ENCODE measurements at regions of chr7 and their contacts with region 1.

Region 1: DNA sequence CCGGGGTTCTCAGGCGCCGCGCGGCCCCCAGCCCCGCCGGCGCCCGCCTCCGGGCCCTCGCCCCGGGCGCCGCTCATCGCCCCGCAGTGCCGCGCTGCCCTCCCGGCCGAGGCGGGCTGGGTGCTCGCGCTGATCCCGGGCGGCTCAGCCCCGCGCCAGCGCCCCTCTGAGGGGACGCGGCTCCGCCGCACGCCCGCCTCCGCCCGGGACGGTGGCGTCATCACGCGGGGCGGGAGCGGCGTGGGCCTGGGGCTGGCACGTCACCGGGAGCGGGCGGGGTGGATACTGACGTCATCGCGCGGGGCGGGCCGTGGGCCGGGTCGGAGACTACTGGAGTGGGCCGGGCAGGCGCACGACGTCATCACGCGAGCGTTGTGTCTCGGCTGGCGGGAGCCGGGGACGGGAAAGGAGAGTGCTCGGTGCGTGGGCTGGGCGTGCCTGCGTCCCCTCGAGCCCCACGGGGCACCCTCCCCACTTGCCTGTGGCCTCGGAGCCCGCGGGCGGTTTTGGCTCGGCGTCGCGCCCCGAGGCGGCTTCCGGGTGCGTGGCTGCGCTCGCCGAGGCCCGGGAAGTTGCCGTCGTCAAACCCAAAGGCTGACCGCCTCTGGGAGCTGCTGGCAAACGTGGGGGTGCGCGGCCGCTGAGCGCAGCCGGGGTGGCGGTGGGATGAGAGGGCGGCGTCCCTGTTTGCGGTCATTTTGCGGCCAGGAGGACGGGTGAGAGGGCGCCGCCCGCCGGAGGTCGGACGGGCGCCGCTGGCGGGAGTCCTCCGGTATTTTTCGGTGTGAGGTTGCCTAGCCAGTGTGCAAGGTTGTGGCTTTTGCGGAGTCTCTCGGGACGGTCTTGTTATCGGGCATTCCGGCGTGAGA is at the start of gene ESYT2:
- DNase-seq: peak; percentile 94
- ATAC-seq: peak; percentile 82
- H3K4me3 ChIP-seq: peak within 1 kb of the TSS; percentile 99
- H3K27ac ChIP-seq: peak within 1 kb of the TSS; percentile 81
- H3K4me1 ChIP-seq: peaks cover 17% of the 10 kb centered on the region
- H3K27me3 ChIP-seq: no peaks in the 10 kb centered on the region
- CTCF ChIP-seq: peak; percentile 32; the same call in 1 of the 2 replicates
- total RNA-seq, gene ESYT2: 76.1 and 78.0 TPM in 2 replicates

Region 2: DNA sequence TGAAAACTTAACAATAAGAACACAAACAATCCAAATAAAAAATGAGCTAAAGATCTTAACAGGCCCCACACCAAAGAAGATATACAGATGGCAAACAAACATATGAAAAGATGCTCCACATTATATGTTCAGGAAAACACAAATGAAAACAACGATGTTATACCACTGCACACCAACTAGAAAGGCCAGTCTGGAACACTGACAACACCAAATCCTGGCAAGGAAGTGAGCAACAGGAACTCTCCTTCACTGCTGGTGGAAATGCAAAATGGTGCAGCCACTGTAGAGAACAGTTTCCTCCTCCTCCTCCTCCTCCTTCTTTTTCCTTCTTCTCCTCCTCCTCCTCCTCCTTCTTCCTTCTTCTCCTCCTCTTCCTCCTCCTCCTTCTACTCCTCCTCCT is 112.8 kb before region 1 on chr7:
- CTCF ChIA-PET with region 1: no interaction called
- POLR2A ChIA-PET with region 1: no interaction called
- intact Hi-C with region 1: no loop called
- DNase-seq: no peak
- ATAC-seq: no peak
- H3K4me3 ChIP-seq: no peak overlapping the region
- H3K27ac ChIP-seq: no peak overlapping the region
- H3K4me1 ChIP-seq: no peaks in the 10 kb centered on the region
- H3K27me3 ChIP-seq: 0 out of 2 replicates have a peak, but pooled peaks cover 4% of the 10 kb centered on the region
- CTCF ChIP-seq: no peak

Region 3: DNA sequence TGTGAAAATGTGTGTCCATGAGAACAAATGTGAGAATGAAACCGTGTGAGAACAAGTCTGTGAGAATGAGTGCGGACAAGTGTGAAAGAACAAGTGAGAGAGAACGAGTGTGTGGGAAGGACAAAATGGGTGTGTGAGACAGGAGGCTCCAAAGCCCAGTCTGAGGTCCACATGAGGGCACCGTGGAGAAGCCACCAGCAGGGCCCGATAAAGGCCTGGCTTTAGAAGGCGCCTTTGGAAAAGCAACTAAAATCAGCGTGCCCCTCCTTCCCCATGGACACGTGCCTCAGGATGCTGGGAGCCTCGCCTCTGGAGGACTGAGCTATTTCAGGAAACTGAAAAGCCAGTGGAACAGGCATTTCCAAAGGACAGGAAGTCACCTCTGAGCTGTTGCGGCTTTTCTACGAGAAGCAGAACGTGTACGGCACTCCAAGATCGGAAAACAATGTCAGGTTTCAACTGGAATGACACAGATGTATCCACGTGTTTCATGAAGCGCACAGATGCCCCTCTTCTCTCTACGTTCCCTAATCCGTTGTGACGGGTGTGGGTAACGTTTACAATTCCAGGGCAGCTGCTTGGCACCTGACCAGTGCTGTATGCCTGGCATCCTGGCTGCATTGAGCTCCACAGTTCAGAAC is 46.7 kb before region 1 on chr7:
- CTCF ChIA-PET with region 1: no interaction called
- POLR2A ChIA-PET with region 1: no interaction called
- intact Hi-C with region 1: loop called (anchors 2 kb)
- DNase-seq: peak; percentile 45
- ATAC-seq: peak; percentile 74
- H3K4me3 ChIP-seq: no peak overlapping the region
- H3K27ac ChIP-seq: no peak overlapping the region
- H3K4me1 ChIP-seq: no peaks in the 10 kb centered on the region; the same call in none of the 2 replicates
- H3K27me3 ChIP-seq: no peaks in the 10 kb centered on the region
- CTCF ChIP-seq: peak; percentile 55

Region 4: GRCh38 chr7:158802473-158803202 is 26.9 kb before region 1 on chr7:
- CTCF ChIA-PET with region 1: no interaction called
- POLR2A ChIA-PET with region 1: interaction called, 10 read pairs
- intact Hi-C with region 1: no loop called
- DNase-seq: peak; percentile 68
- ATAC-seq: peak; percentile 78
- H3K4me3 ChIP-seq: 0 out of 2 replicates have a peak overlapping the region, but pooled peaks have one; percentile 28
- H3K27ac ChIP-seq: peak overlapping the region; percentile 67
- H3K4me1 ChIP-seq: peaks cover 19% of the 10 kb centered on the region
- H3K27me3 ChIP-seq: no peaks in the 10 kb centered on the region
- CTCF ChIP-seq: no peak

Region 5: GRCh38 chr7:158849768-158850544 is 20.4 kb after region 1 on chr7:
- CTCF ChIA-PET with region 1: no interaction called
- POLR2A ChIA-PET with region 1: interaction called, 10 read pairs
- intact Hi-C with region 1: no loop called
- DNase-seq: no peak
- ATAC-seq: no peak; the same call in 1 of the 2 replicates
- H3K4me3 ChIP-seq: no peak overlapping the region
- H3K27ac ChIP-seq: no peak overlapping the region
- H3K4me1 ChIP-seq: no peaks in the 10 kb centered on the region; the same call in 1 of the 2 replicates
- H3K27me3 ChIP-seq: no peaks in the 10 kb centered on the region
- CTCF ChIP-seq: no peak

Region 6: DNA sequence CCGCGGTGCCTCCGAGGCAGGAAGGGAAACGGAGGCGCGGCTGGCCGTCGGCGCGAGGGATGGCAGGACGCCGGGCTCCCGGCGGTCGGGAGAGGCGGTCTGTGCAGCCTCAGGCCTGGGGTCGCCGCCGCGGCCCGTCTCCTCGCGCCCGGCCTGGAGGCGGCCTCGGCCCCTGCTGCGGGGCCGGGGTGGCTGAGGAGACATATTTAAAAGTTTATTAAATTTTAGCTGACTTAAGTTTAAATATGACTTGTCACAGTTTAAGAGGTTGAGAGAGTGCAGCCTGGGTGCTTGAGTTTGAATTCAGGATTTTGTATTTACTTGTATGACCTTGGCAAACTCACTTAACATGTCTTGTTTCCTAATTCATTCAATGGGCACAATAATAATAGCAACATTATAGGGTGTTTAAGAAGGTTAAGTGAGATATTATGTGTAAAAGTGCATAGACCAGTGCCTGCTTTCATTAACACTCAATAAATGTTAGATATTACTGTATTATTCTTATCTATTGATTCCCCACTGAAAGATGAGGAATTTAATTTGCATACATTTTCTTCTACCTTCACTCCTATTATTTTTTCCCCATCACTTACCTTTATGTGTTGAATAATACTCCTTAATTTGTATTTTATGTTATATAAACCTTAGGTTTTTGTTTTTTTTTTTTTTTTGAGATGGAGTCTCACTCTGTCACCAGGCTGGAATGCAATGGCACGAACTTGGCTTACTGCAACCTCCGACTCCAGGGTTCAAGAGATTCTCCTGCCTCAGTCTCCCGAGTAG is 27.5 kb after region 1 on chr7:
- CTCF ChIA-PET with region 1: interaction called, 4 read pairs
- POLR2A ChIA-PET with region 1: interaction called, 4 read pairs
- intact Hi-C with region 1: loop called (anchors 2 kb)
- DNase-seq: no peak
- ATAC-seq: peak; percentile 23
- H3K4me3 ChIP-seq: peak overlapping the region; percentile 75
- H3K27ac ChIP-seq: 0 out of 2 replicates have a peak overlapping the region, but pooled peaks have one; percentile 8
- H3K4me1 ChIP-seq: peaks cover 28% of the 10 kb centered on the region
- H3K27me3 ChIP-seq: no peaks in the 10 kb centered on the region
- CTCF ChIP-seq: no peak